CD4-positive, alpha-beta T cell (primary cell): ENCODE measurements at regions of chrX and their contacts with region 1.

Region 1: GRCh38 chrX:153522259-153522658 is 4.8 kb downstream of the ATP2B3 start:
- DNase-seq: no peak
- ATAC-seq: no peak
- H3K4me3 ChIP-seq: no peak overlapping the region
- H3K4me3 Mint-ChIP-seq: no peak overlapping the region
- H3K27ac ChIP-seq: no peak overlapping the region
- H3K27ac Mint-ChIP-seq: no peak overlapping the region
- H3K4me1 ChIP-seq: peaks cover 4% of the 10 kb centered on the region
- H3K4me1 Mint-ChIP-seq: no peaks in the 10 kb centered on the region
- H3K27me3 ChIP-seq: peaks cover 8 to 23% of the 10 kb centered on the region in 2 experiments
- H3K27me3 Mint-ChIP-seq: peaks cover 9% of the 10 kb centered on the region
- CTCF ChIP-seq: no peak

Region 2: DNA sequence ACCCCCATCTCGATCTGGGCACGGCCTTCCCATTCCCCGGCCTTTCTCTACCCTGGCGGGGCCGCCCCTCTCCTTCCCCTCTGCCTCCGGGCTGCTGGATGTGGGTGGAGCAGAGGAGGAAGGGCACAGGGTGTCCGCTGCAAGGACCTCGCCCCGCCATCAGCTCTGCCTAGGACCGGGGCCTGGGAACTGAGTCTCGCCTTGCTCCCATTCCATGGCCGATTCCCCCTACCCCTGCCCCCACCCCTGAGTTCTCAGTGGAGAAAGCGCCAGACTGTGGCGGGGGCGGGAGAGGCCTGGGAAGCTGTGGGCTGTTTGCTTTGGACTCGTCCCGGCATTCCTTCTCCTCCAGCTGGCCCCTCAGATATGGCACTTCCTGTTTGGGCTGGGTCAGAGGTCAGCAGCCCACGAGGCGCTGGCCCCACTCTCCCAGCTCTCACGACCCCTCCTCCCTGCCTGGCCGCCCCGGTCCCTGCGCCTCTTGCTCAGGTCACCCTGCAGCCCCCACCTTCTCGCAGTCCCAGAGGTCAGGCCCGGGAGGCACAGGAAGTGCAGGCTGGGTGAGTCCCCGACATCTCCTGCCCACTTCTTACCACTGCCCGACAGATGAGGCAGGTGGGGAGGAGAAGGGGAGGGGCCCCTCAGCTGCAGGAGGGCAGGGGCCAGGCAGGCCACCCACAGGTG is 33.9 kb before region 1 on chrX:
- CTCF ChIA-PET with region 1: no interaction called
- POLR2A ChIA-PET with region 1: no interaction called
- intact Hi-C with region 1: loop called in 1 of 2 experiments (anchors 2 kb)
- DNase-seq: no peak
- ATAC-seq: no peak
- H3K4me3 ChIP-seq: no peak overlapping the region
- H3K4me3 Mint-ChIP-seq: no peak overlapping the region
- H3K27ac ChIP-seq: no peak overlapping the region
- H3K27ac Mint-ChIP-seq: no peak overlapping the region
- H3K4me1 ChIP-seq: no peaks in the 10 kb centered on the region
- H3K4me1 Mint-ChIP-seq: no peaks in the 10 kb centered on the region
- H3K27me3 ChIP-seq: no peaks in the 10 kb centered on the region
- H3K27me3 Mint-ChIP-seq: no peaks in the 10 kb centered on the region
- CTCF ChIP-seq: no peak

Region 3: DNA sequence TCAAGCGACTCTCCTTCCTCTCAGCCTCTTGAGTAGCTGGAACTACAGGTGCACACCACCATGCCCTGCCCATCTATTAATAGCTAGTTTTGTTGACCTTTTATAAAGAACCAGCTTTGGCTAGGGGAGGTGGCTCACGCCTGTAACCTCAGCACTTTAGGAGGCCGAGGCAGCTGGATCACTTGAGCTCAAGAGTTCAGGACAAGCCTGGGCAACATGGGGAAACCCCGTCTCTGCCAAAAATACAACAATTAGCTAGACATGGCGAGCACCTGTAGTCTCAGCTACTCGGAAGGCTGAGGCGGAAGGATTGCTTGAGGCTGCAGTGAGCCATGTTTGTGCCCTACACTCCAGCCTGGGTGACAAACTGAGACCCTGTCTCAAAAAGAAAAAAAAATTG is 776.1 kb after region 1 on chrX:
- CTCF ChIA-PET with region 1: no interaction called
- POLR2A ChIA-PET with region 1: no interaction called
- intact Hi-C with region 1: no loop called
- DNase-seq: no peak
- ATAC-seq: no peak
- H3K4me3 ChIP-seq: no peak overlapping the region
- H3K4me3 Mint-ChIP-seq: no peak overlapping the region
- H3K27ac ChIP-seq: no peak overlapping the region
- H3K27ac Mint-ChIP-seq: no peak overlapping the region
- H3K4me1 ChIP-seq: peaks cover 3% of the 10 kb centered on the region
- H3K4me1 Mint-ChIP-seq: no peaks in the 10 kb centered on the region
- H3K27me3 ChIP-seq: no peaks in the 10 kb centered on the region
- H3K27me3 Mint-ChIP-seq: no peaks in the 10 kb centered on the region
- CTCF ChIP-seq: no peak

Region 4: GRCh38 chrX:154738011-154738738 is 1215.9 kb after region 1 on chrX:
- CTCF ChIA-PET with region 1: no interaction called
- POLR2A ChIA-PET with region 1: no interaction called
- intact Hi-C with region 1: no loop called
- DNase-seq: peak in 4 of 14 experiments; percentile 49 to 66 (median 56)
- ATAC-seq: peak; percentile 40
- H3K4me3 ChIP-seq: no peak overlapping the region
- H3K4me3 Mint-ChIP-seq: peak overlapping the region; percentile 39
- H3K27ac ChIP-seq: peak overlapping the region in 1 of 2 donors; percentile 13
- H3K27ac Mint-ChIP-seq: peak overlapping the region; percentile 57
- H3K4me1 ChIP-seq: peaks cover 54% of the 10 kb centered on the region
- H3K4me1 Mint-ChIP-seq: peaks cover 63% of the 10 kb centered on the region
- H3K27me3 ChIP-seq: no peaks in the 10 kb centered on the region
- H3K27me3 Mint-ChIP-seq: no peaks in the 10 kb centered on the region
- CTCF ChIP-seq: no peak